Naive thymus-derived CD4-positive, alpha-beta T cell (primary cell): ENCODE measurements at regions of chr5 and their contacts with region 1.

Region 1: GRCh38 chr5:56871777-56872176 is 37.6 kb upstream of the SETD9 start:
- DNase-seq: no peak
- ATAC-seq: no peak
- H3K4me3 ChIP-seq: no peak overlapping the region
- H3K4me3 Mint-ChIP-seq: no peak overlapping the region
- H3K27ac ChIP-seq: no peak overlapping the region
- H3K27ac Mint-ChIP-seq: peak overlapping the region in 6 of 9 donors; percentile 0 to 53 (median 4)
- H3K4me1 ChIP-seq: no peaks in the 10 kb centered on the region
- H3K4me1 Mint-ChIP-seq: peaks cover 16 to 50% (median 36%) of the 10 kb centered on the region in 7 donors
- H3K27me3 ChIP-seq: no peaks in the 10 kb centered on the region
- H3K27me3 Mint-ChIP-seq: no peaks in the 10 kb centered on the region

Region 2: DNA sequence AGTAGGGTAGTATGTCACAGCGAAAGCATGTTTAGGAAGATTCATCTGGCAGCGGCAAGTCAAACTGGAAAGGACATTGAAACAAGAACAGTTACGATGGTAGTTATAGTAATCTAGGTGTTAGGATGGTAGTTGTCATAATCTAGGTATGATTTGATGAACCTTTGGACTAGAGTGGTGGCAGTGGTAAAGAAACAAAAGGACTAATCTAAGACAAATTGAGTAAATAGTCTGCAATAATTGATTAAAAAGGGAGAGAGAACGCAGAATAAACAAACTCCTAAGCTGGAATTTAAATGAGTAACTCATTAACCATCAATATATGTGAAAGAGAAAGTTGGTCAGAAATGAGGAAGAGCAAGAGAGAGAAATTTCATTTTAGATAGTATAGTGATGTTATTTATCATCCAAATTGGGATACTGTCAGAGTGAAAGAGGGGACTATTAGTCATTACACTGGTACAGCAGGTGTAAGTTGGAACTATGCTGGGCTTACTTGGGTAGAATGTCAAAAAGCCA is 1507.2 kb before region 1 on chr5:
- CTCF ChIA-PET with region 1: no interaction called
- POLR2A ChIA-PET with region 1: no interaction called
- intact Hi-C with region 1: no loop called
- DNase-seq: no peak
- ATAC-seq: no peak
- H3K4me3 ChIP-seq: no peak overlapping the region
- H3K4me3 Mint-ChIP-seq: no peak overlapping the region
- H3K27ac ChIP-seq: no peak overlapping the region
- H3K27ac Mint-ChIP-seq: peak overlapping the region in 1 of 9 donors; percentile 3
- H3K4me1 ChIP-seq: no peaks in the 10 kb centered on the region
- H3K4me1 Mint-ChIP-seq: peaks cover 0 to 3% (median 0%) of the 10 kb centered on the region in 7 donors
- H3K27me3 ChIP-seq: no peaks in the 10 kb centered on the region
- H3K27me3 Mint-ChIP-seq: no peaks in the 10 kb centered on the region

Region 3: DNA sequence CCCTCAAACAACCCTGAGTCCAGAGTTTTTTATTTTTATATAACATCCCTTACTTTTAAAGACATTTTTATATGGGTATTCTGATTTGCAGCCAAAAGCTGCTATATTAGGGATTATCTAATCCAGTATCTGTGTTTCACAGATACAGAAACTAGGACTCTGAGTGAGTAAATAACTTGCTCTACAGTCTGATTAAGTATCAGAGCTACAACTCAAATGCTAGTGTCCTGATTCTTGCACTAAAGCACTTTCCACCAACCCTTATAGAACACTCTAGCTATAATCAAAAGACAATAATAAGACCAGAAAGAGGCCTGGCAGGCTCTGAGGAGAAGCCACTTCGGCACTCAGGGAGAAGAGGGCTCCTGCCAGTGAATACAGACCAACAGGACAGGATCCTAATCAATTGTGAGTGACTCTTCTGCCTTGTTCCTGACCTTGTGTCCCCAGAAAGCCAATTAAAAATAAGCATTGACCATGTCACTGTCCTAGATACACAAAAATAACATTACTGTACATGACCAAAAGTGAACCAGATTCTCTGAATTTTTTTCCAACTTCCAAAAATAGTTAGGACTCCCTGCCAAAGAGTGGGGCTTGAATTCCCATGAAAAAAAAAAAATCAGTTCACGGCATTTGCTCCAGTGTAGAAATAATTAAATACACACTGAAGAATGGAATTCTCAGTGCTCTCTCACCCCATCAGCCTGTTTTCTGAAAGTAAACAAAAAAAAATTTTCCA is 120.0 kb before region 1 on chr5:
- CTCF ChIA-PET with region 1: no interaction called
- POLR2A ChIA-PET with region 1: no interaction called
- intact Hi-C with region 1: no loop called
- DNase-seq: no peak
- ATAC-seq: no peak
- H3K4me3 ChIP-seq: no peak overlapping the region
- H3K4me3 Mint-ChIP-seq: no peak overlapping the region
- H3K27ac ChIP-seq: no peak overlapping the region
- H3K27ac Mint-ChIP-seq: peak overlapping the region in 1 of 9 donors; percentile 62
- H3K4me1 ChIP-seq: no peaks in the 10 kb centered on the region
- H3K4me1 Mint-ChIP-seq: peaks cover 0 to 4% (median 0%) of the 10 kb centered on the region in 7 donors
- H3K27me3 ChIP-seq: no peaks in the 10 kb centered on the region
- H3K27me3 Mint-ChIP-seq: no peaks in the 10 kb centered on the region

Region 4: GRCh38 chr5:56827049-56827448 is 44.7 kb before region 1 on chr5:
- CTCF ChIA-PET with region 1: no interaction called
- POLR2A ChIA-PET with region 1: interaction called, 10 read pairs
- intact Hi-C with region 1: no loop called
- DNase-seq: peak in 1 of 9 donors; percentile 34
- ATAC-seq: peak; percentile 37
- H3K4me3 ChIP-seq: no peak overlapping the region
- H3K4me3 Mint-ChIP-seq: peak overlapping the region; percentile 18 to 93 (median 59)
- H3K27ac ChIP-seq: peak overlapping the region; percentile 51
- H3K27ac Mint-ChIP-seq: peak overlapping the region in 8 of 9 donors; percentile 56 to 95 (median 80)
- H3K4me1 ChIP-seq: peaks cover 38 to 84% of the 10 kb centered on the region in 2 donors
- H3K4me1 Mint-ChIP-seq: peaks cover 75 to 100% (median 95%) of the 10 kb centered on the region in 7 donors
- H3K27me3 ChIP-seq: no peaks in the 10 kb centered on the region
- H3K27me3 Mint-ChIP-seq: no peaks in the 10 kb centered on the region

Region 5: GRCh38 chr5:56852228-56853000 is 19.4 kb before region 1 on chr5:
- CTCF ChIA-PET with region 1: no interaction called
- POLR2A ChIA-PET with region 1: no interaction called
- intact Hi-C with region 1: loop called in 1 of 2 experiments (anchors 2 kb)
- DNase-seq: no peak
- ATAC-seq: peak; percentile 48
- H3K4me3 ChIP-seq: no peak overlapping the region
- H3K4me3 Mint-ChIP-seq: peak overlapping the region; percentile 46 to 73 (median 66)
- H3K27ac ChIP-seq: no peak overlapping the region
- H3K27ac Mint-ChIP-seq: peak overlapping the region; percentile 19 to 89 (median 64)
- H3K4me1 ChIP-seq: peaks cover 40 to 72% of the 10 kb centered on the region in 2 donors
- H3K4me1 Mint-ChIP-seq: peaks cover 71 to 98% (median 90%) of the 10 kb centered on the region in 7 donors
- H3K27me3 ChIP-seq: no peaks in the 10 kb centered on the region
- H3K27me3 Mint-ChIP-seq: no peaks in the 10 kb centered on the region